IMR-90 (cell line): ENCODE measurements at regions of chr12 and their contacts with region 1.

Region 1: GRCh38 chr12:52506858-52507715 is 13.1 kb downstream of the KRT5 start:
- DNase-seq: peak; percentile 65
- ATAC-seq: peak; percentile 84
- H3K4me3 ChIP-seq: no peak overlapping the region
- H3K27ac ChIP-seq: no peak overlapping the region
- H3K4me1 ChIP-seq: no peaks in the 10 kb centered on the region
- H3K27me3 ChIP-seq: peaks cover 7% of the 10 kb centered on the region
- CTCF ChIP-seq: peak; percentile 51
- POLR2A ChIP-seq: no peak
- RAD21 ChIP-seq: peak; percentile 39; the same call in 1 of the 2 replicates

Region 2: GRCh38 chr12:52372216-52373154 is 134.6 kb before region 1 on chr12:
- CTCF ChIA-PET with region 1: no interaction called
- POLR2A ChIA-PET with region 1: no interaction called
- dilution Hi-C with region 1: no loop called
- in situ Hi-C with region 1: no loop called
- intact Hi-C with region 1: loop called (anchors 1 kb)
- DNase-seq: peak; percentile 81
- ATAC-seq: peak; percentile 94
- H3K4me3 ChIP-seq: no peak overlapping the region
- H3K27ac ChIP-seq: no peak overlapping the region
- H3K4me1 ChIP-seq: no peaks in the 10 kb centered on the region
- H3K27me3 ChIP-seq: peaks cover 36% of the 10 kb centered on the region
- CTCF ChIP-seq: peak; percentile 93
- POLR2A ChIP-seq: no peak
- RAD21 ChIP-seq: peak; percentile 92